Activated CD8-positive, alpha-beta T cell treated with anti-CD3 and anti-CD28 coated beads, Interleukin-2, amount 10 ng/mL, durations not matched to agents 7 days and 5 days (primary cell): ENCODE measurements at regions of chr5 and their contacts with region 1.

Region 1: GRCh38 chr5:178075840-178076548 is 37.3 kb upstream of the N4BP3 start:
- DNase-seq: peak; percentile 84
- ATAC-seq: peak; percentile 91
- H3K4me3 Mint-ChIP-seq: no peak overlapping the region
- H3K27ac Mint-ChIP-seq: no peak overlapping the region
- H3K4me1 Mint-ChIP-seq: peaks cover 6% of the 10 kb centered on the region
- H3K27me3 Mint-ChIP-seq: peaks cover 1% of the 10 kb centered on the region

Region 2: DNA sequence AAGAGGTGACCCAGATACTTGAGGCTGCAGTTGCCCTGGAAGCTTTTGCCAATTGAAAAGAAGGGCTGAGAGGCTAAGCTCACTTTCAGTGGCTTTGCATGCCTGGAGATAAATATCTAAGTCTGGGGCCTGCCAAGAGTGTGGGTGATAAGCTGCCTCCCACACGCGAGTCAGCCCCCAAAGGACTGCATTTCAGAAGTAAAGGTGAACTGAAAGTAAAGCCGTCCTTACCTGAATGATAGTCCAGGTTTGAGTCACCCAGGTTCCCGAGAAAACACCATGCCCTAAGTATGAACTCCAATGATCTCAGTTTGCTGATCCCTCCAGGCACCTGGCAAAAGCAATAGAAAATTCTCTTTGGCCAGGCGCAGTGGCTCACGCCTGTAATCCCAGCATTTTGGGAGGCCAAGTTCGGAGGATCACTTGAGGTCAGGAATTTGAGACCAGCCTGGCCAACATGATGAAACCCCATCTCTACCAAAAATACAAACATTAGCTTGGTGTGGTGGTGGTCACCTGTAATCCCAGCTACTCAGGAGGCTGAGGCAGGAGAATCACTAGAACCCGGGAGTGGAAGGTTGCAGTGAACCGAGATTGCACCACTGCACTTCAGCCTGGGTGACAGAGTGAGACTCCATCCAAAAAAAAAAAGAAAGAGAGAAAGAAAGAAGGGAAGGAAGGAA is 15.0 kb after region 1 on chr5:
- CTCF ChIA-PET with region 1: interaction called, 35 read pairs
- POLR2A ChIA-PET with region 1: no interaction called
- DNase-seq: no peak
- ATAC-seq: no peak
- H3K4me3 Mint-ChIP-seq: no peak overlapping the region
- H3K27ac Mint-ChIP-seq: no peak overlapping the region
- H3K4me1 Mint-ChIP-seq: peaks cover 12% of the 10 kb centered on the region
- H3K27me3 Mint-ChIP-seq: peaks cover 3% of the 10 kb centered on the region

Region 3: GRCh38 chr5:178120868-178121357 is 44.9 kb after region 1 on chr5:
- CTCF ChIA-PET with region 1: interaction called, 42 read pairs
- POLR2A ChIA-PET with region 1: no interaction called
- DNase-seq: peak; percentile 90
- ATAC-seq: peak; percentile 87
- H3K4me3 Mint-ChIP-seq: no peak overlapping the region
- H3K27ac Mint-ChIP-seq: no peak overlapping the region
- H3K4me1 Mint-ChIP-seq: peaks cover 31% of the 10 kb centered on the region
- H3K27me3 Mint-ChIP-seq: no peaks in the 10 kb centered on the region

Region 4: GRCh38 chr5:178146020-178146820 is 70.2 kb after region 1 on chr5:
- CTCF ChIA-PET with region 1: interaction called, 204 read pairs
- POLR2A ChIA-PET with region 1: interaction called, 7 read pairs
- DNase-seq: peak; percentile 83
- ATAC-seq: peak; percentile 89
- H3K4me3 Mint-ChIP-seq: no peak overlapping the region
- H3K27ac Mint-ChIP-seq: no peak overlapping the region
- H3K4me1 Mint-ChIP-seq: peaks cover 25% of the 10 kb centered on the region
- H3K27me3 Mint-ChIP-seq: no peaks in the 10 kb centered on the region

Region 5: DNA sequence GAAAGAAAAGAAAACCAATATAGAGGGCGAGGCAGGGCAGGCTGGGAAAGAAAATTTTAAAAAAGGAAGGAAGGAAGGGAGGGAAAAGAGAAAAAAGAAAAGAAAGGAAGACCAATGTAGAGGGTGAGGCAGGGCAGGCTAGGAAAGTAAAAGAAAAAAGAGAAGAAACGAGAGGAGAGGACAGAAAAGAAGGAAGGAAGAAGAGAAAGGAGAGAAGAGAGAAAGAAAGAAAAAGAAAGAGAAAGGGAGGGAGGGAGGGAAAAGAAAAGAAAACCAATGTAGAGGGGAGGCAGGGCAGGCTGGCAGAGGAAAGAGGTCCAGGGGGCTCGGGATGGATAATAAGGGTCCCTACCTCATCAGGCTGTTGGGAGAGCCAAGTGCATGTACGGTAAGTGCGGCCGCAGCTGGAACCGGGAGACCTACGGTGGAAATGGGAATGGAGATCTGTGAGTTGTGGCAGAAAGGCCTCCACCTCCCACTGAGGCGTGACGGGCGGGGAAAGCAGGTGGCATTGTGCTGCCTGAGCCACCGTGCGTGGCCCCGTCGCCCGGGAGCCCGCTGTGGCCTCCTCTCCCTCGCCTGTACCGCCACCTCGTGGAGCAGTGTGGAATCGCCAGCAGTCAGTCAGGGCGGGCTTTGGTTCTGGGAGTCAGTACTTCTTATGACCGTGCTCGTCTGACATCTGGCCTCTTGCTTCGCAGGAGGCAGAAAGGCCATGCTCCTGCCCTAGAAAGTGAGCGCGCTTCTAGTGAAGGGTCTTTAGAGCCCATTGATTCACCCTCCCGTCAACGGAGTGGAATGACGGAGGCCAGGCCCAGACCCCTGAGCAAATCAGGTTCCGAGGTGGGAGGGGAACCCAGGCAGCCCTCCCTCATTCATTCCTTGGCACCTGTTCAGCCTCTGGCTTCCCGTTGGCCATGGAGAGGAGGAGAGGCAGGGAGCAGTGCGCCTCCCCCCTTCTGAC is 88.1 kb after region 1 on chr5:
- CTCF ChIA-PET with region 1: interaction called, 83 read pairs
- POLR2A ChIA-PET with region 1: interaction called, 4 read pairs
- DNase-seq: peak; percentile 93
- ATAC-seq: peak; percentile 99
- H3K4me3 Mint-ChIP-seq: peak overlapping the region; percentile 6
- H3K27ac Mint-ChIP-seq: no peak overlapping the region
- H3K4me1 Mint-ChIP-seq: peaks cover 10% of the 10 kb centered on the region
- H3K27me3 Mint-ChIP-seq: peaks cover 12% of the 10 kb centered on the region

Region 6: GRCh38 chr5:178204182-178204894 is 128.3 kb after region 1 on chr5 and contains the start of gene HNRNPAB:
- CTCF ChIA-PET with region 1: interaction called, 11 read pairs
- POLR2A ChIA-PET with region 1: no interaction called
- DNase-seq: peak; percentile 96
- ATAC-seq: peak; percentile 79
- H3K4me3 Mint-ChIP-seq: peak within 1 kb of the TSS; percentile 96
- H3K27ac Mint-ChIP-seq: peak within 1 kb of the TSS; percentile 99
- H3K4me1 Mint-ChIP-seq: peaks cover 38% of the 10 kb centered on the region
- H3K27me3 Mint-ChIP-seq: peaks cover 2% of the 10 kb centered on the region
- total RNA-seq, gene HNRNPAB: 335 to 336 TPM